Activated B cell treated with CpG ODN at 0.5 μM for 24 hours (primary cell): ENCODE measurements at regions of chr1 and their contacts with region 1.

Region 1: DNA sequence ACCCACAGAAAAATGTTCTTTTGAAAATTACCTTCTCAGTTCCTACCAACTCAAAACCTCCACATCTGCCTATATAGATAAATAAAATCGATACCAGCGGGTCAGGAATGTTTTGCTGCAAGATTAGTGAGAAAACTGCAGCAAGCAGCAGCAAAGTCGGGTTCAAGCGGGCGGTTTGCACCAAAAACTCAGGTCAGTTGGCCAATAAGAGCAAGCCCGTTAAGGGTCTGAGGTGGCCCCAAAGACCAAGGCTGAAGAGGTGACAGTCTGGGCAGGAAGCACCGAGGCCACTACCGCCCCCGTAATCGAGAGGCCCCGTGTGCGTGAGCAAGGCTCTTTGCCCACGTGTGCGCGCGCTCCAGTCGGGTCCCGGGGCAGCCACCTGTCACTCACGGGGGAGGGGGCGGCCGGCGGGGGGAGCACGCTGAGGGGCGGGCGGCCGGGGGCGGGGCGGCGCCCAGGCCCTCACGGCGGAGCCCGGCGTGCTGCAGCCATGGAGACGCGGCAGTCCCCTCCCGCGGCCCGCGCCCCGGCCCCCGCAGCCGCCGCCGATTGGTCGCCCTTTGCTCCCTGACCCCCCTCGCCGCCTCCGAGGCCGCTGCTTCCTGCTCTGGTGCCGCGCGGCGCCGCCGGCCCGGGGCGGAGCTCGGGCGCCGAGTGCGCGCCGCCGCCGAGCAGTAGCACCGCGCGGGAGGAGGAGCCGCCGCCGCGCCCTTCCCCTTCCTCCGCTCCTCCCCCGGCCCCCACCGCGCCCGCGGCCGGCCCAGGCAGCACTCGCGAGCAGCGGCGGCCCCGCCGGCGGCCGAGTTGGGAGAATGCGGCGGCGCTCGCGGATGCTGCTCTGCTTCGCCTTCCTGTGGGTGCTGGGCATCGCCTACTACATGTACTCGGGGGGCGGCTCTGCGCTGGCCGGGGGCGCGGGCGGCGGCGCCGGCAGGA is at the start of gene GALNT2:
- DNase-seq: peak; percentile 88
- ATAC-seq: peak; percentile 88
- H3K4me3 Mint-ChIP-seq: peak within 1 kb of the TSS; percentile 95
- H3K27ac Mint-ChIP-seq: peak within 1 kb of the TSS; percentile 92
- H3K4me1 Mint-ChIP-seq: peaks cover 46% of the 10 kb centered on the region
- H3K27me3 Mint-ChIP-seq: no peaks in the 10 kb centered on the region
- CTCF ChIP-seq: no peak
- total RNA-seq, gene GALNT2: 99.8 and 108 TPM in 2 replicates

Region 2: DNA sequence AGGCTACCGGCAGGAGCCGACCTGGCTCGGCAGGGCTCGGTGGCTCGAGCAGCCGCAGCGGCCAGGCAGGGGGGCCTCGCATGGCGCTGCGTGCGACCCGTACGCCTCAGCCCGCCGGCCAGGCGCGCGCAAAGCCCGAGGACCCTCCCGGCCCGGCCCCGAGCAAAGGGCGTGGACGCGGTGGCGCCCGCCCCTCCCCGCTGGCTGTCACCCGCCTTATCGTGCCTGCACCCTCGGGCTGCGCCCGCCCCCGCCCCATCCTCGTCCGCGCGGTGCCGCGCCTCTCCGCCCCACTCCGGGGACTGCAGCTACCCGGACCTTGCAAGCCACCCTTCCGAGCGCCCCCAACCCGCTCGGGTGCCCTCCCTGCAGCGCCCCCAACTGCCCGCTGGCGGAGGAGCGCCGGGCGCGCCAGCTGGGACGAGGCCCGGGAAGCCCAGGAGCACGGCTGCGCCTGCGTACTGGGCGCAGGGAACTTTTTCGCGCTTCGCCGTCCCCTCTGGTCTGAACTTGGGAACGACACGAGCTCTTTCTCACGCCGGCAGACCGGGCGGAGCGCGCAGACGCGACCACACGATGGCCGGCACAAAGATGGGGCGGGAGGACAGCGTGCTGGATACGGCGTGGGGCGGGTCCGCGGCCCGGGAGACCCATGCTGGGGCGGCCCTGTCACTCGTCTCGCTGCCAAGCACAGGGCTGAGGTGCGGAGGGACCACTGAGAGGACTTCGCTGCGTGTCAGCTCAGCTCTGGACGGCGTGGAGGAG is 508.0 kb before region 1 on chr1 and contains the start of gene ABCB10:
- CTCF ChIA-PET with region 1: no interaction called
- POLR2A ChIA-PET with region 1: no interaction called
- intact Hi-C with region 1: loop called (anchors 5 kb)
- DNase-seq: peak; percentile 91
- ATAC-seq: peak; percentile 80
- H3K4me3 Mint-ChIP-seq: peak within 1 kb of the TSS; percentile 95
- H3K27ac Mint-ChIP-seq: peak within 1 kb of the TSS; percentile 90
- H3K4me1 Mint-ChIP-seq: peaks cover 31% of the 10 kb centered on the region
- H3K27me3 Mint-ChIP-seq: no peaks in the 10 kb centered on the region
- CTCF ChIP-seq: no peak
- total RNA-seq, gene ABCB10: 11.7 and 14.5 TPM in 2 replicates

Region 3: DNA sequence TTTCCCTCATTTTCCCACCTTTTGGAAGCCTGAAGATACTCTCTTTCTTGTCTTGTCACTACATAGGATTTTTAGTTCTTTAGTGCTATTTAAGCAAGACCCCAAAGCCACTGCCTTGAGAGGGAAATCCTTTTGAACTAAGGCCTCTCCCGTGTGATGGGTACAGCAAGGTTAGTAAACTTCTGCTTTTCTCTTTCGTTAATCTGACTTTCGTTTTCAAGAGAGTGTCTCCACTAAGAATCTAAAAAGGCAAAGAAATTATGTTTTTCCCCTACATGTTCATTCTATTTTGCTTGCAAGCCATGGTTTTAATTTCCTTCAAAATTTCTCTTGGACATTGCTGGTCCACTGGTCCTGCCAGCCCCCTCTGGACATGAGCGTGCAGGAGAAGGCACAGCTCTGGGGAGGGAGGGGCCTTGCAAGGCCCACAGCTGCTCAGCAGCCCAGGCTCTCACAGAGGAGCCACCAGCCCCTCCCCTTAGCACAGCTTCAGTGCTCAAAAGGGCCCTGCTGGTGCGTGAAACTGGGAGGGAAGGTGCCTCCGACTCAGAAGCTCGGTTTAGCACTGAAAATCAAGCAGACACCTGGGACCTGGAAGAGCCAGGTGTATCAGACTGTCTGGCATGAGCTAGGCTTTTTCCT is 210.6 kb before region 1 on chr1:
- CTCF ChIA-PET with region 1: no interaction called
- POLR2A ChIA-PET with region 1: interaction called, 4 read pairs
- intact Hi-C with region 1: loop called (anchors 1 kb)
- DNase-seq: peak; percentile 55
- ATAC-seq: peak; percentile 99
- H3K4me3 Mint-ChIP-seq: peak overlapping the region; percentile 90
- H3K27ac Mint-ChIP-seq: peak overlapping the region; percentile 97
- H3K4me1 Mint-ChIP-seq: peaks cover 36% of the 10 kb centered on the region
- H3K27me3 Mint-ChIP-seq: no peaks in the 10 kb centered on the region
- CTCF ChIP-seq: no peak

Region 4: GRCh38 chr1:230011333-230012092 is 55.2 kb before region 1 on chr1:
- CTCF ChIA-PET with region 1: no interaction called
- POLR2A ChIA-PET with region 1: no interaction called
- intact Hi-C with region 1: no loop called
- DNase-seq: no peak
- ATAC-seq: peak; percentile 52
- H3K4me3 Mint-ChIP-seq: no peak overlapping the region
- H3K27ac Mint-ChIP-seq: no peak overlapping the region
- H3K4me1 Mint-ChIP-seq: no peaks in the 10 kb centered on the region
- H3K27me3 Mint-ChIP-seq: peaks cover 9% of the 10 kb centered on the region
- CTCF ChIP-seq: no peak

Region 5: DNA sequence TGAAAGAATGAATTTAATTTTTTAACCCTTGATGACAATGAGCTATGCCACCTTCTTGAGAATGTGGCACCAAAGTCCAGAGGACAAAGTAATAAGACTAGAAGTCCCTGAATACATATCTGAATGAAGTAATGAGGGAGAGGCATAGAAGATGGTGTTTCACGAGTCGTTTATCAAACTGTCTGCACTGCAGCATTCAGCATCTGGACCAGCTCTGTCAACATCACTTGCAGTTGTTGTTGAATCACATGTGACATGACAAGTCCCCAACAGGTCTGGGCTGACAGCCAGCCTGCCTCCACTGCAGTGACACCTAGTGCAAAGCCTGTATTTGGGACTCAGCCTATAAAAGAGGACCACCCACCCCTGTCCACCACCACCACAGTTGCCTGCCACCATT is 17.0 kb before region 1 on chr1:
- CTCF ChIA-PET with region 1: no interaction called
- POLR2A ChIA-PET with region 1: no interaction called
- intact Hi-C with region 1: no loop called
- DNase-seq: no peak
- ATAC-seq: no peak
- H3K4me3 Mint-ChIP-seq: no peak overlapping the region
- H3K27ac Mint-ChIP-seq: no peak overlapping the region
- H3K4me1 Mint-ChIP-seq: peaks cover 4% of the 10 kb centered on the region
- H3K27me3 Mint-ChIP-seq: peaks cover 6% of the 10 kb centered on the region
- CTCF ChIP-seq: no peak

Region 6: DNA sequence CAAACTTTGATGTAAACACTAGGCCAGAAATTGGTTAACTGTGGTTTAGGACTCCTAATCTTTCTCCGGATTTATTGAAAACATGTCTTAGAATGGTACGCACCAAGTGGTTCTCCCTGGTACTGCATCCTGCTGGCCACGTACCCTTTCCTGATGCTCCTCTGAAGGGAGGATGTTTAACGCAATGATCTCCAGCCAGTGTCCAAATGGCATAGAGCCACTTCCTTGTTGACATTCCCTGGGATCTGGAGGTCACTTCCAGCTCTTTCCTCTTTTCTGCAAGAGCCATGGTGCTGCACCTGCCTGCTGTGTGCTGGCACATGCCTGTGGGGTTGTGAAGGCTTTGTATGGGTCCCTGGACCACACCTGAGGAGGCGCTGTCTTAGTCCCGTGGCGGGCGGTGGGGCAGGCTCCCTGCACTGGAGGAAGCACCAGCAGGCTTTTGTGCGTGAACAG is 54.2 kb after region 1 on chr1:
- CTCF ChIA-PET with region 1: interaction called, 7 read pairs
- POLR2A ChIA-PET with region 1: interaction called, 15 read pairs
- intact Hi-C with region 1: loop called (anchors 1 kb)
- DNase-seq: no peak
- ATAC-seq: no peak
- H3K4me3 Mint-ChIP-seq: peak overlapping the region; percentile 12
- H3K27ac Mint-ChIP-seq: peak overlapping the region; percentile 90
- H3K4me1 Mint-ChIP-seq: peaks cover 94% of the 10 kb centered on the region
- H3K27me3 Mint-ChIP-seq: no peaks in the 10 kb centered on the region
- CTCF ChIP-seq: no peak

Region 7: GRCh38 chr1:230212405-230212936 is 145.7 kb after region 1 on chr1:
- CTCF ChIA-PET with region 1: no interaction called
- POLR2A ChIA-PET with region 1: no interaction called
- intact Hi-C with region 1: loop called (anchors 1 kb)
- DNase-seq: no peak
- ATAC-seq: peak; percentile 60
- H3K4me3 Mint-ChIP-seq: peak overlapping the region; percentile 65
- H3K27ac Mint-ChIP-seq: peak overlapping the region; percentile 84
- H3K4me1 Mint-ChIP-seq: peaks cover 97% of the 10 kb centered on the region
- H3K27me3 Mint-ChIP-seq: no peaks in the 10 kb centered on the region
- CTCF ChIP-seq: no peak